AG04449 (cell line): ENCODE measurements at regions of chr2 and their contacts with region 1.

Region 1: DNA sequence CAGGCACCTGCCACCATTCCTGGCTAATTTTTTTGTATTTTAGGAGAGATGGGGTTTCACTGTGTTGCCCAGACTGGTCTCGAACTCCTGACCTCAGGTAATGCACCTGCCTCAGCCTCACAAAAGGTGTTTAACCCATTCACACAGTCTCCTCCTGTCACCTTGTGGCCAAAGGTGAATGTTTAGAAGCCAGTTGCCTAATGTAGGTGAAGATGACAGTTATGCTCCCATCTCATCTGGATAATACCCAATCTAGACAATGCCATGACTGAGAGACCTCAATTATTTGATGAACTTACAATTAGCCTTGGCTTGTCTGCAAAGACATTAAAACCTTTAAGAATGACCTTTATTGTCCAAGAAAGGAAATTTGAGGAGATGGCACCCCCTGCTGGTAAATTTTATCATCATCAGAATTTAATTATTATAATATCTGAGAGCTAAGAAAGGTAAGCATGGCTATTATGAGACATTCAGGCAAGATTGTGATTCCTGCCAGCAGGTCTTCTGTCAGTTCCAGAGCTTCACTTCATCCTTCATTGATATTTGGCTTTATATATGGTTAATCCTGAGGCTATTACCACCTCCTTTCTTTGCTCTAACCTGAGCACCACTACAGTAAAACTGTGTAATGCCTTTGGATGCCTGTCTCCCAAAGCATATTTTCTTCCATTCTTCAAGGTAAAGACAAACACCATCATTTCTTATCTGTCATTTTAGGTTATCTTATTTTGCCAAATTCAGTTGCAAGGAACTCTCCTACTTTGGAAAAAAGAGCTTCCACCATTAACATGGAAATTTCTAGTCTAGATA is 117.6 kb downstream of the FAM124B start:
- DNase-seq: no peak
- H3K4me3 ChIP-seq: no peak overlapping the region
- CTCF ChIP-seq: peak; percentile 45

Region 2: DNA sequence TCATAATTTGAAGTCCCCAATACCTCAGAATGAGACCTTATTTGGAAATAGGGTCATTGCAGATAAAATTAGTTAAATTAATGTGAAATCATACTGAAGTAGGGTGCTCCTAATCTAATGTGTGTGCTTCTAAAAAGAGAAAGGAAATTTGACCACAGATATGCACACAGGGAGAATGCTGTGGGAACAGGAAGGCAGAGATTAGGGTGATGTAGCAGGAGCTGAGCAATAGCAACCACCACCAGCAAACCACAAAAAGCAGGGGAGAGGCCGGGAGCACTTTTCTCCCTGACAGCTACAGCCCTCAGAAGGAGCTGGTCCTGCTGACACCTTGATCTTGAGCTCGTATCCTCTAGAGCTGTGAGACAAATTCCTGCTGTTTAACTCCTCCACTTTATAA is 657.6 kb before region 1 on chr2:
- CTCF ChIA-PET with region 1: no interaction called
- POLR2A ChIA-PET with region 1: no interaction called
- DNase-seq: peak; percentile 79
- H3K4me3 ChIP-seq: no peak overlapping the region
- CTCF ChIP-seq: no peak

Region 3: DNA sequence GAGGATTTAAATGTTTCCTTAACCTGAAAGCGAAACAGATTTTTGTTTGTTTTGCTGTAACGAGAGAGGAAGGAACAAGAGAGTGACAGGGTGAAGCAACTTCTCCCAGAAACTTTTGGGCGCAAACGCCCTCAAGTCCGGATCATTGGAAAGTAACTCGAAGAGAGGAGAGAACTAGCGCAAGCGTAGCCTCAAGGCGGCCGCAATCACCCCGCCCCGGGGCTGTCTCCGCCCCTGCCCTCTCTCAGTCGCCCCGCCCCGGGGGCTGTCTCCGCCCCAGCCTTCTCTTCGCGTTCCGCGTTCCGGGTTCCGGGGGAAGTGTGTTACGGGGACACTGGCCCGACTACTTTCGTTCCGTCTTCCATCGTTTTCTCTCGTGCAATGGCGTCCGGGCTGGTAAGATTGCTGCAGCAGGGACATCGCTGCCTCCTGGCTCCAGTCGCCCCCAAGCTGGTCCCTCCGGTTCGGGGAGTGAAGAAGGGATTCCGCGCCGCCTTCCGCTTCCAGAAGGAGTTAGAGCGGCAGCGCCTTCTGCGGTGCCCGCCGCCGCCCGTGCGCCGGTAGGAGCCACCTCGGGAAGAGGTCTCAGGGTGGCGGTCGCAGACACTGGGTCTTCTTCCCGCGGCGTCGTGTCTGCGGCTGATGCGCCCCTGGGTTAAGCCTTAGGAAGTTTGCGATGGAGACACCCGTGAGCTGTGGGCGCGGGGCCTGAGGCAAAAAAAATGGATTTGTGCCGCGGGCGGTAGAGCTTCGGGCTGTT is 327.1 kb before region 1 on chr2 and contains the start of gene MRPL44:
- CTCF ChIA-PET with region 1: interaction called, 14 read pairs
- POLR2A ChIA-PET with region 1: no interaction called
- DNase-seq: peak; percentile 69
- H3K4me3 ChIP-seq: peak within 1 kb of the TSS; percentile 80
- CTCF ChIP-seq: no peak

Region 4: GRCh38 chr2:223993621-223994232 is 290.6 kb before region 1 on chr2:
- CTCF ChIA-PET with region 1: interaction called, 414 read pairs
- POLR2A ChIA-PET with region 1: no interaction called
- DNase-seq: peak; percentile 52
- H3K4me3 ChIP-seq: no peak overlapping the region
- CTCF ChIP-seq: peak; percentile 76

Region 5: DNA sequence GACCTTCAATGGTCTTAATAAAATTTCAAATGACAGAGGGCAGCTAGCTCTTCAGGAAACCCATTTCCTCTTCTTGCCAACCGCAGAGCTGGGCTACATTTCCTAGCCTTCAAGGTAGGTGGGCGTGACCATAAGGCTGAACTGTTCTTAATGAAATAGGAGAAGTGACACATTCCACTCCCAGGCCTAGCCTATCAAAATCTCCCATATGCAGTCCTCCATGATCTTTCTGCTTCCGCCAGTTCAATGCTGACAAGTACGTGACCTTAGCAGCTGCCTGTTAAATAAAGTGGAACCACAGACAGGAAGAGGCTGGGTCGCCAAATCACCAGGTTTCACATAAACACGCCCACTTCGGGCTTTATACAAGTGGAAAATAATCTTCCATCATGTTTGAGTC is 258.5 kb before region 1 on chr2:
- CTCF ChIA-PET with region 1: interaction called, 21 read pairs
- POLR2A ChIA-PET with region 1: no interaction called
- DNase-seq: no peak
- H3K4me3 ChIP-seq: no peak overlapping the region
- CTCF ChIP-seq: no peak

Region 6: DNA sequence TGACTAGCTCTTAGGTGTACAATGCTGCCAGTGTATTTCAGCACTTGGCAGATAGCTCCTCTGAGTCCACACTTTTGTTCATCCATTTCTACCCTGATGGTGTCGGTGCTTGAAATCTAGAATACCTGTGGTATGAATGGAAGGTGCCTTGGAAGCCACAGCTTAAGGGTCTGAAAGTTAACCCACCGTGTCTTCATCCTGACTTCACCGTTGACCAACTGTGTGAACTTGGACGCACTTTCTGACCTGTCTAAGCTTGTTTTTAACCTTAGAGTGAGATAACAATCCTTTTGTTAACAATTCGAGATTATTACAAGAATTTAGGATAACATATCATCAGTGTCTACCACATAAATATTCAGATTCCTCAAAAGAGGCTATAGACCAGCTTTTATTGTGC is 219.9 kb before region 1 on chr2:
- CTCF ChIA-PET with region 1: interaction called, 10 read pairs
- POLR2A ChIA-PET with region 1: no interaction called
- DNase-seq: no peak
- H3K4me3 ChIP-seq: no peak overlapping the region
- CTCF ChIP-seq: no peak

Region 7: DNA sequence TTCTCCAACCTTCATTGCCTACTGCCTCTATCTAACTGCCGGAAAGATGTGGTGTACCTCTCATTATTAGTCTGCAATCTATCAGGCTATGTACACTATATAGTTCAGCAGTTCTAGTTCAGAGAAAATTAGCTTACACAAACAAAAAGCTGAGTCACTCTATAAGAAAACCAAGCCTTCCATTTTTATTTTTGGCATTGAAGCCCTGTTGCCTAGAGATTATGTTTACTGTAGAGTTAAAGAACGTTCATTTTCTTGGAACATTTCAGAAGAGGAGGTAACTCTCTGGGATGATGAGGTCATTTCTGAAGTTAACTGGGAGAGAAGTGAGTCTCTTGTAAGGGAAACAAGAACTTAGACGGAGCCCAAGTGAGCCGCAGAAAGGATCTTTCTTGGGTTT is 15.9 kb before region 1 on chr2:
- CTCF ChIA-PET with region 1: interaction called, 24 read pairs
- POLR2A ChIA-PET with region 1: no interaction called
- DNase-seq: peak; percentile 75
- H3K4me3 ChIP-seq: no peak overlapping the region
- CTCF ChIP-seq: no peak

Region 8: GRCh38 chr2:224347176-224348051 is 63.1 kb after region 1 on chr2:
- CTCF ChIA-PET with region 1: no interaction called
- POLR2A ChIA-PET with region 1: no interaction called
- DNase-seq: no peak
- H3K4me3 ChIP-seq: no peak overlapping the region
- CTCF ChIP-seq: no peak

Region 9: DNA sequence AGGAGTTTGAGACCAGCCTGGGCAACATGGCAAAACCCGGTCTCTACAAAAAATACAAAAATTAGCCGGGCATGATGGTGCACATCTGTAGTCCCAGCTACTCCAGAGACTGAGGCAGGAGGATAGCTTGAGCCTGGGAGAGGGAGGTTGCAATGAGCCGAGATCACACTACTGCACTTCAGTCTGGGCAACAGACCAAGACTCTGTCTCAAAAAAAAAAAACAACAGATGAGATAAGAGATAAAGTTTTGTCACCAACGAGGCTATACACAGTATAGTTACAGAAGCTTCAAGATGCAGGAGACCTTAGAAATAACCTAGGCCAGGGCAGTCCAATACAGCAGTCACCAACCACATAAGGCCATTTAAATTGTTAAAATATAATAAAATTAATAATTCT is 108.2 kb after region 1 on chr2:
- CTCF ChIA-PET with region 1: no interaction called
- POLR2A ChIA-PET with region 1: no interaction called
- DNase-seq: no peak
- H3K4me3 ChIP-seq: no peak overlapping the region
- CTCF ChIP-seq: no peak